Endothelial cell of umbilical vein (primary cell): ENCODE measurements at regions of chr15 and their contacts with region 1.

Region 1: DNA sequence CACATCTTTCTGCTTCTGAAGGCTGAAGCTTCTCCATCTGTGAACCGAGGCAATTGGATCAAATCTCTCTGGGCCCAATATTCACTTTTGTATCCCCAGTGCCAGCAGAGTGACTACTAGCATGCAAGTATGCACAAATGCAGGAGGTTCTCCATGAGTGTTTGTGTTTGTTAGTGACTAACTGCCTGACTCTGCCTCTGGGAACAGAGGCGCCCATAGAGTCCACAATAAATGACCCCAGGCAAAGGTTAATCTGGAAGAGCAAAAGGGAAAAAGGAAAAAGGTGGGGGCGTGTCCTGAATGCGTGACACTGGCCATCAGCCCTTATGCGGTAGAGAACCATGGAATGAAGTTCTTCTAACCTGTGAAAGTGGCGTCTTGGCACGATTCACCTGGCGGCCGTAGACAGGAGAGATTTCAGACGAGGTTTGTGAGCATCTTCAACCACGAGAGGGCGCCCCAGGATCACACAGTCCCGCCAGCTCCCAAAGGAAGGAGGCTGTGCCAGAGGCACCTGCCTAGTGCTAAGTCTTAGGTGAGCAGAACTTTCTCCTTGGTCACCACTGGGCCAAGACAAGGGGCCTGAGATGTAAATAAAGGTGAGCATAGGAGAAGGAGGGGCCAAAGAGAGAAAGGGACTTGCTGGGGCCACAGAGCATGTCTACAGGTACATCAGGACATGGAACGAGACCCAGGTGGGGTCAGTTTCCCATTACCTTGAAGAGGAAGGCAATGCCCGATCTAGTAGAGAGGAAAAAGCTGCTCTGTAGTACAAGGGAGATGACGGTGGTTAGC is 44.2 kb downstream of the RBPMS2 start:
- DNase-seq: peak; percentile 67
- H3K4me3 ChIP-seq: no peak overlapping the region
- H3K27ac ChIP-seq: no peak overlapping the region
- H3K4me1 ChIP-seq: no peaks in the 10 kb centered on the region
- H3K27me3 ChIP-seq: no peaks in the 10 kb centered on the region
- CTCF ChIP-seq: peak; percentile 84 to 87
- POLR2A ChIP-seq: no peak

Region 2: GRCh38 chr15:64289550-64289949 is 441.7 kb before region 1 on chr15:
- CTCF ChIA-PET with region 1: no interaction called
- POLR2A ChIA-PET with region 1: no interaction called
- dilution Hi-C with region 1: no loop called
- intact Hi-C with region 1: no loop called
- DNase-seq: no peak
- H3K4me3 ChIP-seq: no peak overlapping the region
- H3K27ac ChIP-seq: no peak overlapping the region
- H3K4me1 ChIP-seq: no peaks in the 10 kb centered on the region
- H3K27me3 ChIP-seq: no peaks in the 10 kb centered on the region
- CTCF ChIP-seq: no peak
- POLR2A ChIP-seq: no peak

Region 3: GRCh38 chr15:64693134-64693533 is 38.1 kb before region 1 on chr15:
- CTCF ChIA-PET with region 1: interaction called, 446 read pairs
- POLR2A ChIA-PET with region 1: interaction called, 9 read pairs
- dilution Hi-C with region 1: no loop called
- intact Hi-C with region 1: no loop called
- DNase-seq: no peak
- H3K4me3 ChIP-seq: no peak overlapping the region
- H3K27ac ChIP-seq: no peak overlapping the region
- H3K4me1 ChIP-seq: no peaks in the 10 kb centered on the region
- H3K27me3 ChIP-seq: no peaks in the 10 kb centered on the region
- CTCF ChIP-seq: no peak
- POLR2A ChIP-seq: no peak

Region 4: GRCh38 chr15:64717735-64718495 is 13.3 kb before region 1 on chr15:
- CTCF ChIA-PET with region 1: interaction called, 36 read pairs
- POLR2A ChIA-PET with region 1: no interaction called
- dilution Hi-C with region 1: no loop called
- intact Hi-C with region 1: no loop called
- DNase-seq: peak; percentile 65
- H3K4me3 ChIP-seq: no peak overlapping the region
- H3K27ac ChIP-seq: no peak overlapping the region
- H3K4me1 ChIP-seq: peaks cover 13% of the 10 kb centered on the region
- H3K27me3 ChIP-seq: no peaks in the 10 kb centered on the region
- CTCF ChIP-seq: no peak
- POLR2A ChIP-seq: no peak

Region 5: GRCh38 chr15:64836023-64836536 is 104.9 kb after region 1 on chr15:
- CTCF ChIA-PET with region 1: interaction called, 6 read pairs
- POLR2A ChIA-PET with region 1: no interaction called
- dilution Hi-C with region 1: no loop called
- intact Hi-C with region 1: loop called (anchors 1 kb)
- DNase-seq: no peak
- H3K4me3 ChIP-seq: no peak overlapping the region
- H3K27ac ChIP-seq: no peak overlapping the region
- H3K4me1 ChIP-seq: peaks cover 10% of the 10 kb centered on the region
- H3K27me3 ChIP-seq: no peaks in the 10 kb centered on the region
- CTCF ChIP-seq: no peak
- POLR2A ChIP-seq: no peak

Region 6: DNA sequence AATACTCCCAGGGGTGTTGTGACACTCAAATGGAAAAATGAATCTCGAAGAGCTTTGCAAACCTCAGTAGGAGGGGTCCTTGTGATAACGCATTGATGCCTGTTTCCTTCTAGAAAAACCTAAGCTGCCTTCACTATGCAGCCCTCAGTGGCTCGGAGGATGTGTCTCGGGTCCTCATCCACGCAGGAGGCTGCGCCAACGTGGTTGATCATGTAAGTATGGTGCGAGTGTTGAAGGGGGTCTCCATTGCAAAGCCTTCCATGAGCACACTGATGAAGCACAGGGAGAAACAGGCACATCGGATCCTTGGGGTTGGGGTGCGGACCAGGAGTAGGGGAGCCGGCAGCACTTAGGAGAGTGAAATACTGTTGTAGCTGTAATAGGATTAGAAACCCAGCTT is 202.8 kb after region 1 on chr15:
- CTCF ChIA-PET with region 1: interaction called, 4 read pairs
- POLR2A ChIA-PET with region 1: interaction called, 11 read pairs
- dilution Hi-C with region 1: no loop called
- intact Hi-C with region 1: no loop called
- DNase-seq: no peak
- H3K4me3 ChIP-seq: no peak overlapping the region
- H3K27ac ChIP-seq: no peak overlapping the region
- H3K4me1 ChIP-seq: peaks cover 17% of the 10 kb centered on the region
- H3K27me3 ChIP-seq: no peaks in the 10 kb centered on the region
- CTCF ChIP-seq: no peak
- POLR2A ChIP-seq: no peak